A549 (cell line): ENCODE measurements at regions of chr20 and their contacts with region 1.

Region 1: GRCh38 chr20:45436732-45437391 is 20.9 kb downstream of the PIGT start:
- DNase-seq: peak; percentile 77 to 90
- ATAC-seq: peak; percentile 98 to 99
- H3K4me3 ChIP-seq: peak overlapping the region; percentile 58
- H3K27ac ChIP-seq: peak overlapping the region; percentile 72 to 85
- H3K4me1 ChIP-seq: peaks cover 3% of the 10 kb centered on the region; the same call in 1 of the 3 replicates
- CTCF ChIP-seq: peak; percentile 92
- EP300 ChIP-seq: no peak
- POLR2A ChIP-seq: no peak
- RAD21 ChIP-seq: peak; percentile 91 to 96

Region 2: GRCh38 chr20:45322952-45323383 is 113.9 kb before region 1 on chr20:
- CTCF ChIA-PET with region 1: interaction called, 135 read pairs
- POLR2A ChIA-PET with region 1: interaction called, 4 read pairs
- DNase-seq: peak in 1 of 2 experiments; percentile 63
- ATAC-seq: peak; percentile 61 to 71
- H3K4me3 ChIP-seq: no peak overlapping the region
- H3K27ac ChIP-seq: no peak overlapping the region
- H3K4me1 ChIP-seq: no peaks in the 10 kb centered on the region; the same call in 2 of the 3 replicates
- CTCF ChIP-seq: peak; percentile 59
- EP300 ChIP-seq: no peak
- POLR2A ChIP-seq: no peak
- RAD21 ChIP-seq: peak; percentile 81 to 82

Region 3: DNA sequence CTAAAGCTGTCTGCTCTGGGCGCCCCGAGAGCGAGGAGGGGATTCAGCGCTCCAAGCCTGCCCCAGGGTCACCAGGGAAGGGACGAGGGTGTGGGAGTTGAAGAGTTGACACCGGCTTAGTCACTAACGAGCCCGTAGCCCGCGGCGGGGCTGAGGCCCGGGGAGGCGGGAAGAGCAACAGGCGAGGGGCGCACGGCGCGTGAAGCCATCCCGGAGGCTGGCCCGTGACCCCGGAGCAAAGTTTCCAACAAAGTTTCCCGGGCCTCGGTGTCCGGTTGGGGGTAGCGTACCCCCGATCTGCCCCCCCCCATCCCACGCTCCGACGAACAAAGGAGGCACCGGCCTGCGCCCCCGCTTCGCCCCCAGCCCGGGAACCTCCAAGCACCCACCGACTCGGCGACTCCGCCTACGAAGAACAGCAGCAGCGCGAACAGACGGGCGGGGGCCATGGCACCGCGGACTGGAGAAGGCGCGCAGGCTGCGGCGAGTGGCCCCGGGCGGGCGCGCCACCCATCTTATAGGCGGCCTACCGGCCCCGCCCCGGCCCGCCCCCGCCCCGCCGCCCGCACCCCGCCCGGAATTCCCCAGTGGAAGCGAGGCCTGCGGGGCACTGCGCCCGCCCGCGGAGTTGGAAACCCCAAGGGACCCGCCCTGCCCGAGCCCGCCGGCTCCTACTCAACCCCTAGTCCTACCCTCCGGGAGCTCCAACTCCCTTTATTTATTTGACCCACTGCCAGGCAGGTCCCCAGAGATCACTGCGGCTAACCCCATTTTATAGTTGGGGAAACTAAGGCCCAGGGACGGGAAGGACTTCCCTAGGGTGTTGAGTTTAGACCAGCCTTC is 88.7 kb before region 1 on chr20 and contains the start of gene SDC4:
- CTCF ChIA-PET with region 1: interaction called, 12 read pairs
- POLR2A ChIA-PET with region 1: no interaction called
- DNase-seq: peak; percentile 51 to 74
- ATAC-seq: peak; percentile 72 to 81
- H3K4me3 ChIP-seq: peak within 1 kb of the TSS; percentile 86
- H3K27ac ChIP-seq: peak within 1 kb of the TSS; percentile 92 to 96
- H3K4me1 ChIP-seq: peaks cover 52% of the 10 kb centered on the region
- CTCF ChIP-seq: no peak
- EP300 ChIP-seq: no peak
- POLR2A ChIP-seq: peak; percentile 99
- RAD21 ChIP-seq: no peak
- polyA plus RNA-seq, gene SDC4: 27.4 and 29.0 TPM in 2 replicates

Region 4: GRCh38 chr20:45383131-45383530 is 53.7 kb before region 1 on chr20:
- CTCF ChIA-PET with region 1: interaction called, 10 read pairs
- POLR2A ChIA-PET with region 1: interaction called, 4 read pairs
- DNase-seq: no peak
- ATAC-seq: no peak
- H3K4me3 ChIP-seq: no peak overlapping the region
- H3K27ac ChIP-seq: no peak overlapping the region
- H3K4me1 ChIP-seq: peaks cover 3% of the 10 kb centered on the region; the same call in 1 of the 3 replicates
- CTCF ChIP-seq: no peak
- EP300 ChIP-seq: no peak
- POLR2A ChIP-seq: no peak
- RAD21 ChIP-seq: no peak

Region 5: DNA sequence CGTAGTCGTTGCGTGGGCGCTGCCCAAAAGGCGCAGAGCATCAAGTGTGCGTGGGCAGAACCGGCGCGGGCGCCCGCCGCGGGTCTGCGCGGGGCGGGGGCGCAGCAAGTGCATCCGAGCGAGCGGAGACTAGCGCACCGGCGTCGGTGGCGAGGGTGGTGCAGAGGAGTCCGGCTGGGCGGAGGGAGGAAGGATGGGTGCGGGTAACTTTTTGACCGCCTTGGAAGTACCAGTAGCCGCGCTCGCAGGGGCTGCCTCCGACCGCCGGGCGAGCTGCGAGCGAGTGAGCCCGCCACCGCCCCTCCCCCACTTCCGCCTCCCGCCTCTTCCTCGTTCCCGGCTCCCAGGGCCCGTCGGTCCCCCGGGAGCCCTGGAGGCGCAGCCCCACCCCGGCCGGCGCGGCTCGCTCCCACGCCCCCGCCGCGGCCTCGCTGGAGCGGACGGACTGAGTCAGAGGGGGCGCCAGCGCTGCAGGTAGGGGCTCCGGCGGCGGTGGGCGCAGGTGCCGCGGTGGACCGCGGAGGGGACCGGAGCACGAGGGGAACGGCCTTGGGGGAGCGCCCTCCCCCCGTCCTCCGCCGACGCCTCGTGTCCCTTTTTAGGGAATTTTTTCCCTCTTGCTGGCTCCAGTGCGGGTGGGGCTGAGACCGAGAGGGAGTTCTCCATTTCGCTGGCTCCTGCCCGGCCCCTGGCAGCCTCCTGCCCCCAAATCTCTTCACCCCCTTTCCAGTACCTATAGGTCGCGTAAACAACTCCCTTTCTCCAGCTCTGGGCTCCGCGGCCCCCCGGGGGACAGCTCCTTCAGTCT is 30.4 kb before region 1 on chr20:
- CTCF ChIA-PET with region 1: interaction called, 24 read pairs
- POLR2A ChIA-PET with region 1: no interaction called
- DNase-seq: peak in 1 of 2 experiments; percentile 25
- ATAC-seq: peak; percentile 48 to 75; a peak in 5 of 6 replicates
- H3K4me3 ChIP-seq: peak overlapping the region; percentile 96
- H3K27ac ChIP-seq: peak overlapping the region; percentile 83 to 91
- H3K4me1 ChIP-seq: peaks cover 4% of the 10 kb centered on the region; the same call in 1 of the 3 replicates
- CTCF ChIP-seq: no peak
- EP300 ChIP-seq: no peak
- POLR2A ChIP-seq: no peak
- RAD21 ChIP-seq: no peak

Region 6: GRCh38 chr20:45450097-45450818 is 13.4 kb after region 1 on chr20:
- CTCF ChIA-PET with region 1: interaction called, 45 read pairs
- POLR2A ChIA-PET with region 1: no interaction called
- DNase-seq: peak; percentile 28 to 56
- ATAC-seq: peak in 1 of 2 experiments; percentile 56; a peak in 3 of 6 replicates
- H3K4me3 ChIP-seq: no peak overlapping the region
- H3K27ac ChIP-seq: no peak overlapping the region
- H3K4me1 ChIP-seq: no peaks in the 10 kb centered on the region
- CTCF ChIP-seq: peak; percentile 62
- EP300 ChIP-seq: no peak
- POLR2A ChIP-seq: no peak
- RAD21 ChIP-seq: peak; percentile 37 to 51

Region 7: DNA sequence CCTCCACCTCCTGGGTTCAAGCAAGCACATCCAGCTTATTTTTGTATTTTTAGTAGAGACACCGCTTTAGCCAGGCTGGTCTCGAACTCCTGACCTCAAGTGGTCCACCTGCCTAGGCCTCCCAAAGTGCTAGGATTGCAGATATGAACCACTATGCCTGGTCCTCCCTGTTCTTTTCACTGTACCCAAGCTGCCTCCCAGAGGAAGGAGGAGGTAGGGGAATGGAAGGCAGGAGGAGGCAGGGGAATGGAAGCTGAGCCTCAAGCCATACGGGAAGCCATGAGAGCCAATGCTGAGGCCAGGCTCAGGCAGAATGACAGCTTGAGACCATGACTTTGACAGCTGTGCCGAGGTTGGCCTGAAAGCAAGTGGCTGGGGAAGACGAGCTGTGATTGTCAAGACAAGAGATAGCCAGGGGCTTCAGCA is 548.7 kb after region 1 on chr20:
- CTCF ChIA-PET with region 1: no interaction called
- POLR2A ChIA-PET with region 1: no interaction called
- DNase-seq: peak in 1 of 2 experiments; percentile 52
- ATAC-seq: peak in 1 of 2 experiments; percentile 42; a peak in 3 of 6 replicates
- H3K4me3 ChIP-seq: no peak overlapping the region
- H3K27ac ChIP-seq: no peak overlapping the region
- H3K4me1 ChIP-seq: peaks cover 5% of the 10 kb centered on the region
- CTCF ChIP-seq: no peak
- EP300 ChIP-seq: no peak
- POLR2A ChIP-seq: no peak
- RAD21 ChIP-seq: 0 out of 5 replicates have a peak, but pooled peaks of 1 of the 2 experiments have one; percentile 17